Dorsolateral prefrontal cortex (tissue), 120 donors: ENCODE measurements at regions of chr19 and their contacts with region 1.

Region 1: GRCh38 chr19:32224371-32225244 is 120.8 kb upstream of the ZNF507 start:
- DNase-seq: peak in 6 of 10 donors; percentile 36 to 81 (median 56)
- H3K4me3 ChIP-seq: peak overlapping the region in 55 of 59 donors; percentile 3 to 62 (median 40)
- H3K27ac ChIP-seq: peak overlapping the region in 3 of 59 donors; percentile 1 to 28 (median 27)
- H3K27me3 ChIP-seq: peaks cover 0 to 14% (median 0%) of the 10 kb centered on the region in 45 donors
- CTCF ChIP-seq: peak; percentile 88 to 100 (median 100)

Region 2: GRCh38 chr19:30669329-30670010 is 1555.1 kb before region 1 on chr19:
- intact Hi-C with region 1: loop called in 1 of 2 experiments (anchors 5 kb)
- DNase-seq: peak in 9 of 10 donors; percentile 76 to 85 (median 80)
- H3K4me3 ChIP-seq: peak overlapping the region in 46 of 59 donors; percentile 4 to 52 (median 30)
- H3K27ac ChIP-seq: peak overlapping the region in 6 of 59 donors; percentile 6 to 46 (median 20)
- H3K27me3 ChIP-seq: peaks cover 0 to 10% (median 0%) of the 10 kb centered on the region in 45 donors
- CTCF ChIP-seq: peak; percentile 61 to 92 (median 85)

Region 3: GRCh38 chr19:30682999-30683536 is 1541.5 kb before region 1 on chr19:
- intact Hi-C with region 1: loop called (anchors 2 to 5 kb)
- DNase-seq: peak; percentile 66 to 86 (median 80)
- H3K4me3 ChIP-seq: peak overlapping the region in 44 of 59 donors; percentile 1 to 52 (median 36)
- H3K27ac ChIP-seq: peak overlapping the region in 22 of 59 donors; percentile 1 to 77 (median 44)
- H3K27me3 ChIP-seq: no peaks in the 10 kb centered on the region
- CTCF ChIP-seq: peak; percentile 85 to 99 (median 94)

Region 4: DNA sequence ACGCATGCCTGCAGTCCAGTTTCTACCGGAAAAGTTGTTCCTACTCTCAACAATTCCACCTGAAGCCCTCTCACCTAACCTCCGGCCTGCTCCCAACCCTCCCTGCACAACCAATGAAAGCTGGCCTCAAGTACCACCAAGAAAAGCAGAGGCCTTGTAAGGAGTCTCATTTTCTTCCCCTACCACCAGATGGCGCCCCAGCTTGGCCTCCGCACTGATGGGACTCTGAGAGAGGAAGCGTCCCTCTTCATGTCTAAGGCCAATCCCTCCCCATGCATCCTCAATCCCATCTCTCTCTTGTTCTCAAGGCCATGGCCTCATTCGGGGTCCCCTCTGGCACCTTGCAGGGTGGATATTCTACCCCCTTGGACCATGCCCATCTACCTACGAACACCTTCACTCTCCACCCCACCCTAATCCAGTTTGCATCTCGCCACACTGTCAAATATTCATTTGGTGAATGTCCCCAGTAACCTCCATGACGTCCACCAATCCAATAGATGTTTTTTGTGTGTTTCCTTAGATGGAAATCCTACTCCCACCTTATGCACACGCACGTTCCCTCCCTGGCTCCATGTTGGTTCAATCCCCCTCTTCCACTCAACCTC is 1439.7 kb before region 1 on chr19:
- intact Hi-C with region 1: loop called in 1 of 2 experiments (anchors 10 kb)
- DNase-seq: peak in 7 of 10 donors; percentile 10 to 59 (median 52)
- H3K4me3 ChIP-seq: no peak overlapping the region
- H3K27ac ChIP-seq: no peak overlapping the region
- H3K27me3 ChIP-seq: peaks cover 0 to 15% (median 0%) of the 10 kb centered on the region in 45 donors
- CTCF ChIP-seq: peak; percentile 32 to 75 (median 64)

Region 5: DNA sequence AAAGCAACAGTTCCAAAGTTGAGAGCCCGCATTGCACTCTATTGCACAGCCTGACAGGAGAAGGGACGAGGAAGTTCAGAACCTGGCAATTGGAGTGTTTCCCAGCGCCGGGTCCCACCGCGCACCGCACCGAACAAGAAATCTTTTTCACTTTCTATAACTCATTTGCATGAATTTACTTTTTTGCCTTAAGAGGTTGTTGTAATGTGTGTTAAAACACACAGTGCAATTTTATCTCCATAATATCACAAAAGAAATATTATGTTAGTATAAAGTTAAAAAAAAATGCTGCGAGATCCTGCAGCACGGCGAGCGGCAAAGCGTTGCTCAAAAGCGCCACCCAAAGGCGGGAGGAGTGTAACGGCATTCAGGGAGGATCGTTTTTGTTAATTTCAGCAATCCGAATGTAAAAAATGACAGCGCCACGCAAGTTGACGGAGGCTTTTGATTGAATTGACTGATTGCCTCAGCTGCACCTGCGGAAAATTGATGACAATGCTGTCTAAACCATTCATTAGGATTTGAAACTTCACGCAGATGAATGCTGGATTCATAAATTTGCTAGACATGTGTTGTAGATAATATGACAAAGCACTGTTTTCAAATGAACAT is 182.8 kb before region 1 on chr19:
- intact Hi-C with region 1: loop called in 1 of 2 experiments (anchors 10 kb)
- DNase-seq: peak in 8 of 10 donors; percentile 11 to 59 (median 45)
- H3K4me3 ChIP-seq: peak overlapping the region in 58 of 59 donors; percentile 12 to 65 (median 41)
- H3K27ac ChIP-seq: no peak overlapping the region
- H3K27me3 ChIP-seq: peaks cover 0 to 51% (median 18%) of the 10 kb centered on the region in 45 donors
- CTCF ChIP-seq: peak; percentile 53 to 90 (median 78)

Region 6: DNA sequence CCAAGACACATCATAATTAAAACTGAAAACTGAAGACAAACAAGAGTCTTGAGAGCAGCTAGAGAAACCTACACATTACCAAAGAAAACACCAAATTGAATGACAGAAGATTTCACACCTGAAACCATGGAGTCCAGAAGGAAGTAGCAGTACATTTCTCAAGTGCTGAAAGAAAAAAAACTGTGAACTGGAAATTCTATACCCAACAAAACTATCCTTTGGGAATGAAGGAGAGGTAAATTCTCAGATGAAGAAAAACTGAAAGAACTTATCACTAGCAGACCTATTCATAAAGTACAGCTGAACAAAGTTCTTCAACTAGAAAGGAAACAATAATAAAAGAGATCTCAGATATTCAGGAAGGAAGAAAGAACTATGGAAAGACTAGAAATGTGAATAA is 77.9 kb before region 1 on chr19:
- intact Hi-C with region 1: no loop called
- DNase-seq: no peak
- H3K4me3 ChIP-seq: no peak overlapping the region
- H3K27ac ChIP-seq: no peak overlapping the region
- H3K27me3 ChIP-seq: no peaks in the 10 kb centered on the region
- CTCF ChIP-seq: no peak